Psoas muscle (tissue), 8 donors: ENCODE measurements at regions of chr20 and their contacts with region 1.

Region 1: DNA sequence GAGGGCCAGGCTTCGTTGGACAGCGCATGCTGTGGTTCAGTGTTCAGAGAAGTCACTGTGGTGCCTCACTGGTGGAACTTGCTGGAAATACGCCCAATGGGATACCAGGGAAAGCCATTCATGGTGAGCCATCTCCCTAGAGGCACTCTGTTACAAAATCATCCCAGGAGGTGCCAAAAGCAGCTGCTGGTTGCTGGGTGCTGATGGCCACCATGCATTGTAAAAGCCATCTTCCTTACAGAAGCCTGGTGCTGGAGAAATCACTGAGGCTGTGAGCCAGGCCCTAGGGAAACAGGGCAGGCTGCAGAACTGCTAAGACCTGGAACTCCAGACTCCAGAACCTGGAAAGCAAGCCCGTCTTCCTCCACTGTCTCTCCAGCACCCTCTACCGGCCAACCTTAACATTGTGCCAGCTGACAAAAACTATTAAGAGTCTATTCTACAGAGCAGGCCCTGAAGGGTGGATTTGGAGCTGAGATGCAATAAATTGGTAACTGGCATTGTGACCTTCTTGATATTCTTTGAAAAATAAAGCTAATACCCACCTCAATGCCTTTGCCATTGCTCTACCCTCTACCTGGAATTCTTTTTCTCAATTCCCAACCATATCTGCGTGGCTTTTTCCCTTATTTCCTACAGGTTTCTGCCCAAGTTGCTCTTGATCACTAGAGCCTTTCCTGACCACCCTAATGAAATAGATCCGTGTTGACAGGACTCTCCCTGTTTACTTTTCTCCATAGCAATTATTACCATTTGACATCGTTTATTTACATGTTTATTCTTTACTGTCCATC is 18.5 kb downstream of the SNRPB start:
- DNase-seq: peak; percentile 55 to 78
- ATAC-seq: peak; percentile 54 to 83 (median 76)
- H3K4me3 ChIP-seq: no peak overlapping the region
- H3K27ac ChIP-seq: no peak overlapping the region
- H3K4me1 ChIP-seq: no peaks in the 10 kb centered on the region
- H3K27me3 ChIP-seq: no peaks in the 10 kb centered on the region
- CTCF ChIP-seq: peak; percentile 70

Region 2: DNA sequence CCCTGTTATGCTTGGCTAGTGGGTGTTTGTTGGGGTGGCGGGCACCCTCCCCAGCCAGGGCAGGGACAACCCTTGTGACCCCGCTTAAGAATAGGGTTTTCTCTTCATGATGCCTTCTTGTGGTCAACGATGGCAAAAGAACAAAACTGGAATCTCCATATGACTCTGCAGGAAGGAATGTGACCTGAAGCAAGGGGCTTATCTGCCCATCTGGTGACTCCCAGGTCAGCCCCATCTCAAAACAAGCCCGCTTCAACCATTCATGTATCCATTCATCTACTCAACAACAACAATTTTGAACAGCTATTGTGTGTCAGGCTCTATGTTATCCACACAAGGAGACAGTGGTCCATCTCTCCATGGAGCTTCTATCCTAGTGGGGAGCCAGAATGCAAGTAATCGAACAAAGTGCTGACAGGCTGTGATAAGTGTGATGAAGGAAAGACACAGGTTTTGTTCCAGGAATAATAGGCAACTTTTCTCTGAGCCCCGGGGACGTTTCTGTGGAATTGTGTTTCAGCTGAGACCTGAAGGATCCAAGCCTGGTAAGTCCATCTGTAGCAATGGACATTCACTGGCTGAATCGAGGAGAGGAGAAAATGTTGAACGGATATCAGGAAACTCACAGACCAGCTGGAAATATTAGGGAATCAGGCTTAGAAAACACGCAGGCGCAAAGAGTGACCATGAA is 102.2 kb before region 1 on chr20:
- intact Hi-C with region 1: loop called in 1 of 2 experiments (anchors 2 kb)
- DNase-seq: no peak
- ATAC-seq: no peak
- H3K4me3 ChIP-seq: no peak overlapping the region
- H3K27ac ChIP-seq: no peak overlapping the region
- H3K4me1 ChIP-seq: no peaks in the 10 kb centered on the region
- H3K27me3 ChIP-seq: peaks cover 0 to 18% (median 3%) of the 10 kb centered on the region in 3 donors
- CTCF ChIP-seq: no peak

Region 3: DNA sequence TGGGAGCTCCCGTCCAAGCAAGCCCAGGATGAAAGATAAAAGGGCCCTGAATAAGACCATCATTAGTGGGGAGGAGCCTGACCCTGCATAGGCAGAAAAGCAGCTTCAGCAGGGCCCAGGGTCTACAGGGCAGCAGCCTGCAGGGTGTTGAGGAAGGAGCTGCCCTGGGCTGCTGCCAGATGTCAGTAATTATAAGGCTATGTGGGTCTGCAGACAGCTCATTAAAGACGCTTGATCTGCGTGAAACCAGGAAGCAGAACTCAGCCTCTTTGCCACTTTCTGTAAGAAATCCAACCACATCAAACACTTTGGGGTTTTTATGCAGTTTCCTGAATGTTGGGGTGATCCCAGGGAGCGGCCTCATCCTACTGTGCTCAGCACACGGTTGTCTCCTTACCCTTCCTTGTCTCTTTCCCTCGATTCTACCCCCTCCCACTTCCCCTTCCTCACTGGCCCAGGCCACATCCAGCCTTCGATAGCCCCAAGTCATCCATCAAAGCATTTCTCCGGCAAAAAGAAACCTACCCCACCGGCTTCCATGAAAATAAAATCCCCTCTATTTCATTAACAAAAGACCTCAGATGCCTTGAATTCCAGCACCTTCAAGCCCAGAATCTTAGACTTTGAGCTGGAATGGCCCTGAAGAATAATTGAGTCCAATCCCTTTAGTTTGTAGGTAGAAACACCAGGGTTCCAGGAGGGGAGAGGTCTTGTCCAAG is 72.5 kb before region 1 on chr20:
- intact Hi-C with region 1: no loop called
- DNase-seq: no peak
- ATAC-seq: no peak
- H3K4me3 ChIP-seq: no peak overlapping the region
- H3K27ac ChIP-seq: no peak overlapping the region
- H3K4me1 ChIP-seq: no peaks in the 10 kb centered on the region
- H3K27me3 ChIP-seq: no peaks in the 10 kb centered on the region
- CTCF ChIP-seq: no peak

Region 4: GRCh38 chr20:2473516-2473915 is 21.4 kb after region 1 on chr20:
- intact Hi-C with region 1: no loop called
- DNase-seq: no peak
- ATAC-seq: no peak
- H3K4me3 ChIP-seq: no peak overlapping the region
- H3K27ac ChIP-seq: no peak overlapping the region
- H3K4me1 ChIP-seq: peaks cover 16% of the 10 kb centered on the region
- H3K27me3 ChIP-seq: no peaks in the 10 kb centered on the region
- CTCF ChIP-seq: no peak

Region 5: GRCh38 chr20:2599288-2600006 is 147.3 kb after region 1 on chr20:
- intact Hi-C with region 1: no loop called
- DNase-seq: no peak
- ATAC-seq: no peak
- H3K4me3 ChIP-seq: no peak overlapping the region
- H3K27ac ChIP-seq: no peak overlapping the region
- H3K4me1 ChIP-seq: no peaks in the 10 kb centered on the region
- H3K27me3 ChIP-seq: peaks cover 0 to 10% (median 1%) of the 10 kb centered on the region in 3 donors
- CTCF ChIP-seq: no peak